Activated B cell treated with CpG ODN at 0.5 μM for 24 hours (primary cell): ENCODE measurements at regions of chr20 and their contacts with region 1.

Region 1: GRCh38 chr20:59120491-59120890 is 43.1 kb upstream of the ZNF831 start:
- DNase-seq: no peak
- ATAC-seq: no peak
- H3K4me3 Mint-ChIP-seq: peak overlapping the region; percentile 54
- H3K27ac Mint-ChIP-seq: peak overlapping the region; percentile 99
- H3K4me1 Mint-ChIP-seq: peaks cover 68% of the 10 kb centered on the region
- H3K27me3 Mint-ChIP-seq: no peaks in the 10 kb centered on the region
- CTCF ChIP-seq: no peak

Region 2: GRCh38 chr20:58888521-58889333 is 231.8 kb before region 1 on chr20:
- CTCF ChIA-PET with region 1: no interaction called
- POLR2A ChIA-PET with region 1: interaction called, 28 read pairs
- intact Hi-C with region 1: loop called (anchors 2 kb)
- DNase-seq: peak; percentile 73
- ATAC-seq: peak; percentile 45
- H3K4me3 Mint-ChIP-seq: peak overlapping the region; percentile 84
- H3K27ac Mint-ChIP-seq: peak overlapping the region; percentile 59
- H3K4me1 Mint-ChIP-seq: peaks cover 27% of the 10 kb centered on the region
- H3K27me3 Mint-ChIP-seq: no peaks in the 10 kb centered on the region
- CTCF ChIP-seq: no peak

Region 3: GRCh38 chr20:58995461-58996225 is 124.8 kb before region 1 on chr20:
- CTCF ChIA-PET with region 1: no interaction called
- POLR2A ChIA-PET with region 1: no interaction called
- intact Hi-C with region 1: no loop called
- DNase-seq: no peak
- ATAC-seq: no peak
- H3K4me3 Mint-ChIP-seq: no peak overlapping the region
- H3K27ac Mint-ChIP-seq: peak overlapping the region; percentile 60
- H3K4me1 Mint-ChIP-seq: peaks cover 47% of the 10 kb centered on the region
- H3K27me3 Mint-ChIP-seq: no peaks in the 10 kb centered on the region
- CTCF ChIP-seq: no peak

Region 4: DNA sequence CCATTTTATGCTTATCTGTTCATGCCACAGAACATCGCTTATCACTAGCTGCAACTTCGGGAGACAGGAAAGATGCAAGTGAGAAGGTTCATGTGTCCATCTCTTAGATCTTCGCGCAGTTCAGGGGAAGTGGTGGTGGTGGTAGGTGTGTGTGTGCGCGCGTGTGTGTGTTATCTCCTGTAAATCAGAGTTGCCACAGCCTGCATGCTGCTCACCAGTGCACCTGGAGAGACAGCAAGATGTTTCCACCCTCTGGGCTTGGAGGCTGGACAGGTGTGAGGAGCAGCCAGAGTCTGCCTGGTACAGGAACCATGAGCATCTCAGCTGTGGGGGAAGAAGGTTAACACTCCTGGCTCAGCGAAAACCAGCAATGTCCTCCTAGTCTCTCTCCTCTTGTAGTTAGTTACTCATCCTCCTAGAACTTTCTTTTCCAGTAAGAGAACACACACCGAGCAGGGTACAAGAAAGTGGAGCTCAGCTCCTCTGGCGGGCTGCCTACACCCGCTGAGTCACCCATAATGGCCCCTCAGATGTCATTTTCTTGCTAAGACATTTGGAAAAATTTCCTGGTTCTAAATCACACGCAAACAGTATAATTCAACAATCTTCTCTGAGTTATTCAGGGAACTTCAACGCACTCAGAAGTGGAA is 106.4 kb before region 1 on chr20:
- CTCF ChIA-PET with region 1: no interaction called
- POLR2A ChIA-PET with region 1: no interaction called
- intact Hi-C with region 1: no loop called
- DNase-seq: no peak
- ATAC-seq: no peak
- H3K4me3 Mint-ChIP-seq: no peak overlapping the region
- H3K27ac Mint-ChIP-seq: no peak overlapping the region
- H3K4me1 Mint-ChIP-seq: peaks cover 47% of the 10 kb centered on the region
- H3K27me3 Mint-ChIP-seq: no peaks in the 10 kb centered on the region
- CTCF ChIP-seq: no peak

Region 5: GRCh38 chr20:59055295-59055694 is 65.2 kb before region 1 on chr20:
- CTCF ChIA-PET with region 1: no interaction called
- POLR2A ChIA-PET with region 1: no interaction called
- intact Hi-C with region 1: no loop called
- DNase-seq: no peak
- ATAC-seq: no peak
- H3K4me3 Mint-ChIP-seq: no peak overlapping the region
- H3K27ac Mint-ChIP-seq: no peak overlapping the region
- H3K4me1 Mint-ChIP-seq: no peaks in the 10 kb centered on the region
- H3K27me3 Mint-ChIP-seq: peaks cover 31% of the 10 kb centered on the region
- CTCF ChIP-seq: no peak

Region 6: DNA sequence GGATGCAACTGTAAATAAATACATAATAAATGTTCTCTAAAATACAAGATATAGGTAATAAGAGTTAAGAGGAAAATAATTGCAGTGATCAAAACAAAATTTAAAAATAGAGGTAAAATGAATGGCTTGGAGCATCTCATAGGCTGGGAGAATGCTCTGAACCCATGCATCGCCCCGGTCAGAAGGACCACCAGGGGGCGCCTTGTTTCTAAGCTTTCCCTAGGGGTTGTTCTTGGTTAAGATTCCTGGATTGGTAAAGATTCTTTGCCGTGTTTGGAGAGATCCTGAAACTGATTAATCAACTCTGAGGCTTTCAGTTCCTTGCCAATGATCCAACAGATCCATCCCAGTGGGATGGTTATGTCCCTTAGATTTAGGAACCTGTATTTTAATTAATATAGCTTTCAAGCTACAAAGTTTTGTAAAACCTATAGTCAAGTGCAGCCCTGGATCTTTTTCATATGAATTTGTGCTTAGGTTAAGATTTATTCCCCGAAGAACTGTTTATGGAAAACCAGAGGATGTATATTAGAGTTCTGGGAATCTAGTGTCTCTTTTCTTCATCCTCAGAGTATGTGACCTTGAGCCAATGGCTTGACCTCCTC is 32.6 kb before region 1 on chr20:
- CTCF ChIA-PET with region 1: interaction called, 56 read pairs
- POLR2A ChIA-PET with region 1: interaction called, 19 read pairs
- intact Hi-C with region 1: loop called (anchors 1 kb)
- DNase-seq: peak; percentile 70
- ATAC-seq: peak; percentile 82
- H3K4me3 Mint-ChIP-seq: no peak overlapping the region
- H3K27ac Mint-ChIP-seq: peak overlapping the region; percentile 5
- H3K4me1 Mint-ChIP-seq: peaks cover 12% of the 10 kb centered on the region
- H3K27me3 Mint-ChIP-seq: peaks cover 14% of the 10 kb centered on the region
- CTCF ChIP-seq: peak; percentile 55

Region 7: GRCh38 chr20:59159493-59160376 is 39.2 kb after region 1 on chr20:
- CTCF ChIA-PET with region 1: interaction called, 5 read pairs
- POLR2A ChIA-PET with region 1: interaction called, 64 read pairs
- intact Hi-C with region 1: loop called (anchors 1 kb)
- DNase-seq: no peak
- ATAC-seq: peak; percentile 33
- H3K4me3 Mint-ChIP-seq: peak overlapping the region; percentile 65
- H3K27ac Mint-ChIP-seq: peak overlapping the region; percentile 37
- H3K4me1 Mint-ChIP-seq: peaks cover 57% of the 10 kb centered on the region
- H3K27me3 Mint-ChIP-seq: no peaks in the 10 kb centered on the region
- CTCF ChIP-seq: no peak

Region 8: DNA sequence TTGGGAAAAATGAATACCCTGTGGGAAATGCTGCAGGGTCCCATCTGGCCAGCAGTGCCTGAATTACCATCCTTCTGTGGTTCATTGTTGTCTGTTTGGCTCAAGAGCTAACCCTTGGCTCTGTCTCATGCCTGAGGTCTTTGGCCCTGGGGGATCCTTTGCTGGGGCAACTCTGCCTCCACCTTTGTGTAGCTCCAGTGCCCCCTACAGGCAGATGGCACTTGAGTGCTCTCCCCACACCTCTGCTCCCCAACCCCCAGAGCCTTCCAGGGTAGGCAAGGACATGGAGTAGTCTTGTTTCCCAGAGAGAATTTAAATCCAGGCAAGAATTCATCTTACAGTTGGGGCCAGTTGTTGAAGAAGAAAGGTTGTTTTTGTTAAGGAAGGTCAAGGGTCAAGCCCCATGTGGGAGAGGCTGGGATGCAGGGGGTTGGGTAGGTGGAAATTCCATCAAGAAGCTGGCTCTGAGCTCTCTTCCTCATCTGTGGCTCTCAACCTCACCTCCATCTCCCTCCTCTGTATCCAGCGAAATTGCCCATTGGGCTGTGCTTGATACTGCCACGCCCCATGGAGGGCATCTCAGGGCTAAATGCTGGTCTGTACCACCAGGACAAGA is 87.4 kb after region 1 on chr20:
- CTCF ChIA-PET with region 1: interaction called, 33 read pairs
- POLR2A ChIA-PET with region 1: interaction called, 8 read pairs
- intact Hi-C with region 1: no loop called
- DNase-seq: peak; percentile 59
- ATAC-seq: peak; percentile 100
- H3K4me3 Mint-ChIP-seq: no peak overlapping the region
- H3K27ac Mint-ChIP-seq: peak overlapping the region; percentile 30
- H3K4me1 Mint-ChIP-seq: peaks cover 6% of the 10 kb centered on the region
- H3K27me3 Mint-ChIP-seq: no peaks in the 10 kb centered on the region
- CTCF ChIP-seq: no peak